ENCODE measurements at regions of chr1 and their contacts with region 1.

Region 1: GRCh38 chr1:101025657-101026504 is at the start of gene DPH5:
- DNase-seq: peak; percentile 86
- H3K4me3 Mint-ChIP-seq: peak within 1 kb of the TSS; percentile 93
- H3K27ac Mint-ChIP-seq: peak within 1 kb of the TSS; percentile 93
- H3K4me1 Mint-ChIP-seq: peaks cover 17% of the 10 kb centered on the region
- H3K27me3 Mint-ChIP-seq: no peaks in the 10 kb centered on the region
- CTCF ChIP-seq: no peak
- total RNA-seq, gene DPH5: 20.6 and 25.8 TPM in 2 replicates

Region 2: GRCh38 chr1:100902365-100902764 is 123.5 kb before region 1 on chr1:
- CTCF ChIA-PET with region 1: no interaction called
- intact Hi-C with region 1: no loop called
- DNase-seq: no peak
- H3K4me3 Mint-ChIP-seq: no peak overlapping the region
- H3K27ac Mint-ChIP-seq: no peak overlapping the region
- H3K4me1 Mint-ChIP-seq: no peaks in the 10 kb centered on the region
- H3K27me3 Mint-ChIP-seq: no peaks in the 10 kb centered on the region
- CTCF ChIP-seq: no peak

Region 3: GRCh38 chr1:101288491-101288944 is 262.6 kb after region 1 on chr1:
- CTCF ChIA-PET with region 1: no interaction called
- intact Hi-C with region 1: loop called (anchors 10 kb)
- DNase-seq: peak; percentile 59
- H3K4me3 Mint-ChIP-seq: no peak overlapping the region
- H3K27ac Mint-ChIP-seq: no peak overlapping the region
- H3K4me1 Mint-ChIP-seq: peaks cover 22% of the 10 kb centered on the region
- H3K27me3 Mint-ChIP-seq: no peaks in the 10 kb centered on the region
- CTCF ChIP-seq: peak; percentile 33

Measured in Calu3 (cell line).